IMR-90 (cell line): ENCODE measurements at regions of chr4 and their contacts with region 1.

Region 1: DNA sequence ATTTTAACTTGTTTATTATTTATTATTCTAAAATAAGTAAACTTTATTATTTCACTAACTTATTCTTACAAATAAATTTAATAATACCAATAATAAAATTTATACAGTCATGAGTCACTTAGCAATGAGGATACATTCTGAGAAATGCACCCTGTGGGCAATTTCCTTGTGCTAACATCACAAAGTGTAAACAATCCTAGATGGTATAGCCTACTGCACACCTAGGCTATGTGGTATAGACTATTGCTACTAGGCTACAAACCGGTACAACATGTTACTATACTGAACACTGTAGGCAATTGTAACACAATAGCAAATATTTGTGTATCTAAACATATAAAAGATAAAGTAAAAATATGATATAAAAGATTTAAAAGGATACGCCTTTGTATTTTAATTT is 479.5 kb downstream of the EPHA5 start:
- DNase-seq: no peak
- ATAC-seq: no peak
- H3K4me3 ChIP-seq: no peak overlapping the region
- H3K27ac ChIP-seq: no peak overlapping the region
- H3K4me1 ChIP-seq: no peaks in the 10 kb centered on the region
- H3K27me3 ChIP-seq: no peaks in the 10 kb centered on the region
- CTCF ChIP-seq: no peak
- POLR2A ChIP-seq: no peak
- RAD21 ChIP-seq: no peak

Region 2: DNA sequence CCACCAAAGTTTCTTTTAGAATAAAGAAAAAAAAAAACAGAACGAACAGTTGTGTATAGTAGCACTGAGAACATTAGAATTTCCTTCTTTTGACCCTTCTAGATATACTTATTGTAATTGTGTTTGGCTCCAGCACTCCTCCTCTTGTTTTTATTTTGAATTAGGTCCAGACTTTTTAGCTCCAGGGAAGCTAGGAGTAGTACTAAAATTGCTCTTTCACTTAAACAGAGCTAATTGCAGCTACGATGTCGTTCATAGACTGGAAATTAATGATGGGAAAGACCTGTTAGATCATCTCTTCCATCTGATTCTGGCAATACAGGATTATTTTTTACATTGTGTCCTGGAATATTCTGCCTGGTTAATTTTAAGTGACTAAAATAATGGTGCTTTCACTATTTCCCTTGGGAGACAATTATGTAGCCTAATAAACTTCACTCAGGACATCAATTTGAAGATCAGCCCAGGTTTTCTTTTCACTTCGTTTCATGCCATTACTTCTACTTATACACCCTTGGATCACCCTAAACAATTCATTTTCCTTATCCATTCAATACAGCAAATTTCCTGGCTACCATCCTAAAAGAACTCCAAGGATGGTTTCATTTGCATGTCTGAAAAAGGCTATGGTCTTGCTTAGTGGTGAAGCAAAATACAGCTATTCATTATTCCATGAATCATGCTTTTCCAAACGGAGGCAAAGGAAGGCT is 300.7 kb before region 1 on chr4:
- CTCF ChIA-PET with region 1: no interaction called
- POLR2A ChIA-PET with region 1: no interaction called
- dilution Hi-C with region 1: no loop called
- in situ Hi-C with region 1: no loop called
- intact Hi-C with region 1: no loop called
- DNase-seq: no peak
- ATAC-seq: no peak
- H3K4me3 ChIP-seq: no peak overlapping the region
- H3K27ac ChIP-seq: no peak overlapping the region
- H3K4me1 ChIP-seq: no peaks in the 10 kb centered on the region
- H3K27me3 ChIP-seq: no peaks in the 10 kb centered on the region
- CTCF ChIP-seq: no peak
- POLR2A ChIP-seq: no peak
- RAD21 ChIP-seq: no peak

Region 3: DNA sequence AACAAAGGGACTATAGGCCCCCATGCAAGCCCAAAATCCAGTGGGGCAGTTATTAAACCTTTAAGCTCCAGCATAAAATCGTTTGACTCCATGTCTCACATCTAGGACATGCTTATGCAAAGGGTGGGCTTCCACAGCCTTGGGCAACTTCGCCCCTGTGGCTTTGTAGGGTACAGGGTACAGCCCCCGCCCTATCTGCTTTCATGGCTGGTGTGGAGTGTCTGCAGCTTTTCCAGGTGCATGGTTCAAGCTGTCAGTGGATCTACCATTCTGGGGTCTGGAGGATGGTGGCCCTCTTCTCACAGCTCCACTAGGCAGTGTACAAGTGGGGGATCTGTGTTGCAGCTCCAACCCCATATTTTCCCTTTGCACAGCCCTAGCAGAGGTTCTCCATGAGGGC is 221.7 kb before region 1 on chr4:
- CTCF ChIA-PET with region 1: no interaction called
- POLR2A ChIA-PET with region 1: no interaction called
- dilution Hi-C with region 1: no loop called
- in situ Hi-C with region 1: no loop called
- intact Hi-C with region 1: no loop called
- DNase-seq: no peak
- ATAC-seq: no peak
- H3K4me3 ChIP-seq: no peak overlapping the region
- H3K27ac ChIP-seq: no peak overlapping the region
- H3K4me1 ChIP-seq: no peaks in the 10 kb centered on the region
- H3K27me3 ChIP-seq: no peaks in the 10 kb centered on the region
- CTCF ChIP-seq: no peak
- POLR2A ChIP-seq: no peak
- RAD21 ChIP-seq: no peak

Region 4: GRCh38 chr4:65217179-65217578 is 26.4 kb after region 1 on chr4:
- CTCF ChIA-PET with region 1: no interaction called
- POLR2A ChIA-PET with region 1: no interaction called
- dilution Hi-C with region 1: no loop called
- in situ Hi-C with region 1: no loop called
- intact Hi-C with region 1: loop called (anchors 2 kb)
- DNase-seq: no peak
- ATAC-seq: no peak
- H3K4me3 ChIP-seq: no peak overlapping the region
- H3K27ac ChIP-seq: no peak overlapping the region
- H3K4me1 ChIP-seq: no peaks in the 10 kb centered on the region
- H3K27me3 ChIP-seq: no peaks in the 10 kb centered on the region
- CTCF ChIP-seq: no peak
- POLR2A ChIP-seq: no peak
- RAD21 ChIP-seq: no peak

Region 5: DNA sequence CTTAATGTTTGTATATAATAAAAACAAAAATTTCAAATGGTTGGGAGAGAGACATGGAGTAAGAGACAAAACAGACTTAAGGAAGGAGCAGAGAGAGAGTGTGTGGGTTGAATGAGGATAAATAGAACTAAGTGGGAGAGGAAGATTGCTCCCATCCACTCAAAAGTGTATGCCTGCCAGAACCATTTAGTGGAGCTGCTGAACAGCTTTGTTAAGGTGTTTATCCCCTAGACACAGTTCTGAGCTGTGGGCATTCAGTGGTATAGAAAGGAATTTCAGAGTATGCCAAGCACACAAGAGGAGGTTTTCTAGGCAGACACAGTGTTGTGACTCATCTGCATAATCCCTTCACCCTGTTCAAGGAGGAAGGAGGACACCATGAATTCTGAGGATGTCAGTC is 988.1 kb after region 1 on chr4:
- CTCF ChIA-PET with region 1: no interaction called
- POLR2A ChIA-PET with region 1: no interaction called
- dilution Hi-C with region 1: no loop called
- in situ Hi-C with region 1: no loop called
- intact Hi-C with region 1: no loop called
- DNase-seq: no peak
- ATAC-seq: no peak
- H3K4me3 ChIP-seq: no peak overlapping the region
- H3K27ac ChIP-seq: no peak overlapping the region
- H3K4me1 ChIP-seq: no peaks in the 10 kb centered on the region
- H3K27me3 ChIP-seq: no peaks in the 10 kb centered on the region
- CTCF ChIP-seq: no peak
- POLR2A ChIP-seq: no peak
- RAD21 ChIP-seq: no peak